ENCODE measurements at regions of chr9 and their contacts with region 1.

Region 1: GRCh38 chr9:33737811-33738606 is 57.4 kb upstream of the PRSS3 start:
- DNase-seq: peak; percentile 62
- ATAC-seq: peak; percentile 95
- H3K4me3 ChIP-seq: no peak overlapping the region
- H3K27ac ChIP-seq: no peak overlapping the region
- H3K4me1 ChIP-seq: peaks cover 2% of the 10 kb centered on the region; the same call in 1 of the 2 replicates
- H3K27me3 ChIP-seq: peaks cover 7% of the 10 kb centered on the region
- CTCF ChIP-seq: peak; percentile 78
- POLR2A ChIP-seq: no peak
- RAD21 ChIP-seq: peak; percentile 84

Region 2: GRCh38 chr9:33750307-33750838 is 12.4 kb after region 1 on chr9:
- CTCF ChIA-PET with region 1: interaction called, 13 read pairs
- POLR2A ChIA-PET with region 1: no interaction called
- dilution Hi-C with region 1: no loop called
- in situ Hi-C with region 1: no loop called
- intact Hi-C with region 1: no loop called
- DNase-seq: peak; percentile 15
- ATAC-seq: peak; percentile 89
- H3K4me3 ChIP-seq: peak overlapping the region; percentile 38
- H3K27ac ChIP-seq: no peak overlapping the region
- H3K4me1 ChIP-seq: no peaks in the 10 kb centered on the region; the same call in 1 of the 2 replicates
- H3K27me3 ChIP-seq: peaks cover 40% of the 10 kb centered on the region
- CTCF ChIP-seq: no peak
- POLR2A ChIP-seq: no peak
- RAD21 ChIP-seq: no peak

Region 3: GRCh38 chr9:33778700-33779351 is 40.8 kb after region 1 on chr9:
- CTCF ChIA-PET with region 1: interaction called, 9 read pairs
- POLR2A ChIA-PET with region 1: no interaction called
- dilution Hi-C with region 1: no loop called
- in situ Hi-C with region 1: no loop called
- intact Hi-C with region 1: loop called (anchors 1 kb)
- DNase-seq: peak; percentile 59
- ATAC-seq: peak; percentile 72
- H3K4me3 ChIP-seq: no peak overlapping the region
- H3K27ac ChIP-seq: no peak overlapping the region
- H3K4me1 ChIP-seq: peaks cover 4% of the 10 kb centered on the region; the same call in 1 of the 2 replicates
- H3K27me3 ChIP-seq: no peaks in the 10 kb centered on the region
- CTCF ChIP-seq: peak; percentile 75
- POLR2A ChIP-seq: no peak
- RAD21 ChIP-seq: peak; percentile 70

Region 4: GRCh38 chr9:33852216-33852826 is 114.3 kb after region 1 on chr9:
- CTCF ChIA-PET with region 1: interaction called, 4 read pairs
- POLR2A ChIA-PET with region 1: no interaction called
- dilution Hi-C with region 1: no loop called
- in situ Hi-C with region 1: no loop called
- intact Hi-C with region 1: loop called (anchors 1 kb)
- DNase-seq: peak; percentile 27
- ATAC-seq: peak; percentile 60
- H3K4me3 ChIP-seq: no peak overlapping the region
- H3K27ac ChIP-seq: no peak overlapping the region
- H3K4me1 ChIP-seq: peaks cover 12% of the 10 kb centered on the region
- H3K27me3 ChIP-seq: no peaks in the 10 kb centered on the region
- CTCF ChIP-seq: peak; percentile 40
- POLR2A ChIP-seq: no peak
- RAD21 ChIP-seq: peak; percentile 57

Region 5: GRCh38 chr9:34025062-34025461 is 287.1 kb after region 1 on chr9:
- CTCF ChIA-PET with region 1: no interaction called
- POLR2A ChIA-PET with region 1: no interaction called
- dilution Hi-C with region 1: no loop called
- in situ Hi-C with region 1: no loop called
- intact Hi-C with region 1: loop called (anchors 1 kb)
- DNase-seq: peak; percentile 40
- ATAC-seq: no peak; the same call in 1 of the 2 replicates
- H3K4me3 ChIP-seq: no peak overlapping the region
- H3K27ac ChIP-seq: no peak overlapping the region
- H3K4me1 ChIP-seq: no peaks in the 10 kb centered on the region
- H3K27me3 ChIP-seq: no peaks in the 10 kb centered on the region
- CTCF ChIP-seq: no peak
- POLR2A ChIP-seq: no peak
- RAD21 ChIP-seq: no peak

Measured in IMR-90 (cell line).